AG04450 (cell line): ENCODE measurements at regions of chr19 and their contacts with region 1.

Region 1: DNA sequence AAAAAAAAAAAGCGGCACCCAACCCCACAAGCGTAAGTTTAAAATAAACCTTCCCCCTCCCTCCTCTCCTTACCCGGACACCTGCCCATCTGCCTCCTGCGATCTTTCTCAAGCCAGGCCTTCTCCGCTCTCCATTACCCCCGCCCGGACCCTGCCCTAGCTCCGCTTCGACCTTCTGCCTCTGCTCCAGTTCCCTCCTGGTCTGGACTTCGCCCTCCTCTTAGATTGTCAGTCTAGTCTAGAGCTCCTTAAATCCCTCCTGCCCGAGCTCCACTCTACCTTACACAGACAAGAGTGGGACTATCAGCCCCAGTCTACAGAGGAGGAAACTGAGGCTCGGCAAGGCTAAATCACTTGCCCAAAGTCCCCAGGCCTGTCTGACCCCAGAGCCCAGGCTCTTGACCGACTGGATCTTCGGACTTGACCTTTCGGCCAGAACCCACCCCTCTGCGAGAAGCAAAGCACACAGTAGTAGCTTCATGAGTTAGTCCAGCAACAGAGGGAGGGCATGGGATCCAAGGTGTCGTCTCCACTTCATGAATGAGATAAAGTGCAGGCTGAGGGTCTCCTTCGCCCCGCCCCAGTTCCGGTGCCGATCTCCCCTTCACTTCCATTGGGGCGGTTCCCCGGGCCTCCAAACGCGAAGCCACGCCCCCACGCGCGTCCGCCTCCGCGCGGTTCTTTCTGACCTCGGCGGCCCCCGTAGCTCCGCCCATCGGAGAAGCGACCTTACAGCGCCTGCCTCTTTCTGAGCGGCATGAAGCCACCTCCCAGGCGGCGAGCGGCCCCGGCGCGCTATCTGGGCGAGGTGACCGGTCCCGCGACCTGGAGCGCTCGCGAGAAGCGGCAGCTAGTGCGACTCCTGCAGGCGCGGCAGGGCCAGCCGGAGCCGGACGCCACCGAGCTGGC is at the start of gene SNAPC2:
- DNase-seq: peak; percentile 88
- H3K4me3 ChIP-seq: peak within 1 kb of the TSS; percentile 70
- H3K27ac ChIP-seq: peak within 1 kb of the TSS; percentile 75
- H3K27me3 ChIP-seq: peaks cover 7% of the 10 kb centered on the region
- CTCF ChIP-seq: no peak
- polyA plus RNA-seq, gene SNAPC2: 12.1 and 17.7 TPM in 2 replicates

Region 2: DNA sequence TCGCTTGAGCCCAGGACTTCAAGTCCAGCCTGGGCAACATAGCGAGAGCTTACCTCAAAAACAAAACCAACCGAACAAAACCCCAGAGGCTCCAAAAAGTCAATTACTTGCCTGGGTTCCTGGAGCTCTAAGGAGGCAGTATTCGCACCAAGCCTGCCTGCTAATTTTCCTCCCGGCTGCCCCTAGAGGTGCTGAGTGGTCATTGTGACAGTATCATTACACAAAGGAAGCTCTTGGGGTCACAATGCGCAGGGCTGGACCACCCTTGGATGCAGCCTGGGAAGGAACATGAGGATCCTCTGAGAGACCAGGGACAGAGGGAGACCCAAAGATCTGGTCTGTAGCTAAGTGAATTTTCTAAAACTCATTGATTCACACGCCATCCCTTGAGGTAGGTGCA is 422.6 kb before region 1 on chr19:
- CTCF ChIA-PET with region 1: interaction called, 10 read pairs
- POLR2A ChIA-PET with region 1: no interaction called
- DNase-seq: no peak
- H3K4me3 ChIP-seq: no peak overlapping the region
- H3K27ac ChIP-seq: no peak overlapping the region
- H3K27me3 ChIP-seq: peaks cover 21% of the 10 kb centered on the region
- CTCF ChIP-seq: peak; percentile 48

Region 3: GRCh38 chr19:7868676-7869452 is 51.0 kb before region 1 on chr19:
- CTCF ChIA-PET with region 1: interaction called, 15 read pairs
- POLR2A ChIA-PET with region 1: interaction called, 8 read pairs
- DNase-seq: no peak
- H3K4me3 ChIP-seq: peak overlapping the region; percentile 50
- H3K27ac ChIP-seq: no peak overlapping the region
- H3K27me3 ChIP-seq: peaks cover 21% of the 10 kb centered on the region
- CTCF ChIP-seq: peak; percentile 43

Region 4: DNA sequence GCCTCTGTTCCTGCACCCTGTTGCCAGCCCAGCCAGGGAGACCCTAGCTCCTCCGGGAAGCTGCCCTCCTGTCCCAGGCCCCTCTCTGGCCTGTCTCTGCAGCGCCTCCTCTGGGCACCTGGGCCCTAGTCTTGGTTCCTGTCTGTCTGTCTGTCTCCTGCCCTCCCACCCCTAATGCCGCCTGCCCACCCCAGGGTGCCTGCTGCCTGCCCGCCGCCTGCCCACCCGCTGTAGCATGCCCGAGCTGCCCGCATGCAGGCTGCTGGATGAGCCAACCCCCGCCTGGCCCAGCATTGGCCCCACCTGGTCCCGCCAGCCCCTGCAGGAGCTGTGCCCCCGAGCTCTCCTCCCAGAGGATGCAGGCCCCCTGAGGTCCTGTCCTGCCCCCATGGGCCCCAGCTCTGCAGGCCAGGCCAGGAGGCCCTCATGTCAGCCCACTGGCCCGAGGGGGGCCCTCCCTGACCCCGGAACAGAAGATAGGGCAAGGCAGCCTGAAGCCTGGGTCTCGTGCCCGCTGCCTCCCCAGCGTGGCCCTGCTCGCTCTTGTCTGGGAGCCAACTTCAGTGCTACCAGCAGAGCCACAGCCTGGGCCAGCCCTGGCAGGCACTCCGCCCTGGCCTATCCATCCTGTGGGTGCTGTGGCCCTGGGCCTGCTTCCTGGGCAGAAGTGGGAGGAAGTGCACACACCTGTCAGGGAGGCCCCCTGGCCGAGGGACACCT is 11.0 kb before region 1 on chr19:
- CTCF ChIA-PET with region 1: interaction called, 5 read pairs
- POLR2A ChIA-PET with region 1: interaction called, 19 read pairs
- DNase-seq: no peak
- H3K4me3 ChIP-seq: no peak overlapping the region
- H3K27ac ChIP-seq: no peak overlapping the region
- H3K27me3 ChIP-seq: no peaks in the 10 kb centered on the region
- CTCF ChIP-seq: no peak

Region 5: DNA sequence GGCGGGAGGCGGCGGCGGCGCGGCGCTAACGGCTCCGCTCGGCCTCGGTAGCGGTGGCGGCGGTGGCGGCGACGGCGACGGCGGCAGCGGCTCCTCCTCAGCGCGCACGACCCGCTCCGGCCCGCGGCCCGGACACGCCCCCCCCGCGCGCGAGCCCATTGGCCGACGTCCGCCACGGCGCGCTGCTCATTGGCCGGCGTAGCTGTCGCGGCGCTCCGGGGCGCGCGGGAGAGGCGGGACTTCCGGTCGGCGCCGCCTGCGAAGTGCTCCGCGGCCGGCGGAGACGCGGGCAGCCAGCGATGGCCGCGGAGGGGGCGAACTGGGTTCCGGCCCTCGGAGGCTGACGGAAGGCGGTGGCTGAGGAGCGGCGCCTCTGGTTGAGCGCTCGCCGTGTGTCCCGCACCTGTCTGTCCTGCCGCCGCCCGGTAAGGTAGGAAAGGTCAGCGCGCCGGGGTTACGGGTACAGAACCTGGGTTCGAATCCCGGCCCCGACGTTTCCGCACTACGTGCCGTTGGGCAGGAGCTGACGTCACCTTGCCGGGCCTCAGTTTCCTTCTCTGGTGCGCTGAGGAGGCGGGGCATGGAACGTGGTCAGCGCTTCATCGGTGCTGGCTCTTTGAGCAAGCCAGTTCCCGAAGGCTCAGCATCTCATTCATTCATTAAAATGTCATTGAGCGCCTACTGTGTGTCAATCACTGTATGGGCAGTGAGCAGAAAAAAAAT is 85.8 kb after region 1 on chr19 and contains the start of gene ELAVL1:
- CTCF ChIA-PET with region 1: interaction called, 12 read pairs
- POLR2A ChIA-PET with region 1: no interaction called
- DNase-seq: peak; percentile 50
- H3K4me3 ChIP-seq: peak within 1 kb of the TSS; percentile 95
- H3K27ac ChIP-seq: peak within 1 kb of the TSS; percentile 57
- H3K27me3 ChIP-seq: no peaks in the 10 kb centered on the region
- CTCF ChIP-seq: no peak
- polyA plus RNA-seq, gene ELAVL1: 44.7 and 52.3 TPM in 2 replicates

Region 6: GRCh38 chr19:8036434-8037099 is 116.7 kb after region 1 on chr19:
- CTCF ChIA-PET with region 1: no interaction called
- POLR2A ChIA-PET with region 1: no interaction called
- DNase-seq: no peak
- H3K4me3 ChIP-seq: no peak overlapping the region
- H3K27ac ChIP-seq: no peak overlapping the region
- H3K27me3 ChIP-seq: peaks cover 11% of the 10 kb centered on the region
- CTCF ChIP-seq: no peak